ENCODE measurements at regions of chr6 and their contacts with region 1.

Region 1: GRCh38 chr6:90179190-90180169 is 117.2 kb downstream of the BACH2 start:
- DNase-seq: peak; percentile 64
- ATAC-seq: no peak
- H3K4me3 Mint-ChIP-seq: no peak overlapping the region
- H3K27ac Mint-ChIP-seq: peak overlapping the region; percentile 87
- H3K4me1 Mint-ChIP-seq: peaks cover 81% of the 10 kb centered on the region
- H3K27me3 Mint-ChIP-seq: no peaks in the 10 kb centered on the region
- CTCF ChIP-seq: peak; percentile 75

Region 2: DNA sequence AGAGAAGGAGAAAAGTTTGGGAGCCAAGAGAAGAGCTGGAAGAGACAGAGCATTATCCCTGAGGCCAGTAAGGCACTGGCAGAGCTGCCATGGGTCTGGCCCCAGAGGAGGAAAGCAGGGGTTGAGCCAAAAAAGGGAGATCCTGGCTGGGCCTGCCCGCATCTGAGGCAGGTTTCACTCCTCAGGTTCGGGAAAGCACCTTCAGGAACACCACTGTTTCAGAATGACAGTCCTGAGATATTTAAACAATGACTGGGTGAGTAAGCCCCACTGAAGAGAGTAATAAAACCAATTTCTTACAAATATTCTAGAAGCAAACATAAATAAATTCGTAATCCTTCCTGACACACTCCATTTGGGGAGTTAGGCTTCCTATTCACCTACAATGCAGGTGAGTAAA is 35.1 kb before region 1 on chr6:
- CTCF ChIA-PET with region 1: interaction called, 10 read pairs
- POLR2A ChIA-PET with region 1: no interaction called
- intact Hi-C with region 1: no loop called
- DNase-seq: peak; percentile 75
- ATAC-seq: peak; percentile 71
- H3K4me3 Mint-ChIP-seq: peak overlapping the region; percentile 34
- H3K27ac Mint-ChIP-seq: peak overlapping the region; percentile 89
- H3K4me1 Mint-ChIP-seq: peaks cover 78% of the 10 kb centered on the region
- H3K27me3 Mint-ChIP-seq: no peaks in the 10 kb centered on the region
- CTCF ChIP-seq: no peak

Region 3: DNA sequence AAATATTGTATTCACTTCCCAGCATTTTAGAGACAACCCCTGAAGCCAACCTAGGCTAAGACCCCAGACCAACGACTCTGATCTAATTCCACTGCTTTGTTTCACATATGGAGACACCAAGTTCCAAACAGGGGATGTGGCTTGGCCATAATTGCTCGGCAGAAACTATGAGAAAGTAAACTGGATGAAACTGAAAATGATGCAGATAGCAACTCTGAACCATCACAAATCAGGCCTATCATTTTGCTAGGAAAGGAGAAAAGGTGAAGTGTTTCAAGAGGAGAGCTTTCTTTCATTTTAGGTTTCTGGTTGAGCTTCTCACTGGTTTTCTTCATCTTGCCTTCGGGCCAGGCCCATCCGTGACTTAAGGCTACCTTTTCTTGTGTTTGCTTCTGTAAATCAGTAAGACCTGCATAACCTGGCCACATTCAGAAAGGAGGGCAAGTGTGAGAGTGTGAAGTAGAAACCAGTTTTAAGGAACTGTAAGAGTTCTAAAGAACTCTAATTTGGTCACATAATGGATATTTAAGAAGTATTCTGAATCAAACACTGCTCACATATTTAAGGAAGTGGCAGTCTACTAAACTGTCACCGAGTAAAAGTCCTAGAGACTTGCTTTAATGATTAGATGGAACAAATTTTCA is 11.4 kb after region 1 on chr6:
- CTCF ChIA-PET with region 1: interaction called, 10 read pairs
- POLR2A ChIA-PET with region 1: interaction called, 6 read pairs
- intact Hi-C with region 1: no loop called
- DNase-seq: peak; percentile 44
- ATAC-seq: peak; percentile 47
- H3K4me3 Mint-ChIP-seq: peak overlapping the region; percentile 56
- H3K27ac Mint-ChIP-seq: peak overlapping the region; percentile 86
- H3K4me1 Mint-ChIP-seq: peaks cover 87% of the 10 kb centered on the region
- H3K27me3 Mint-ChIP-seq: no peaks in the 10 kb centered on the region
- CTCF ChIP-seq: no peak

Region 4: GRCh38 chr6:90241229-90241880 is 61.9 kb after region 1 on chr6:
- CTCF ChIA-PET with region 1: no interaction called
- POLR2A ChIA-PET with region 1: no interaction called
- intact Hi-C with region 1: no loop called
- DNase-seq: no peak
- ATAC-seq: no peak
- H3K4me3 Mint-ChIP-seq: no peak overlapping the region
- H3K27ac Mint-ChIP-seq: peak overlapping the region; percentile 81
- H3K4me1 Mint-ChIP-seq: peaks cover 79% of the 10 kb centered on the region
- H3K27me3 Mint-ChIP-seq: no peaks in the 10 kb centered on the region
- CTCF ChIP-seq: no peak